ENCODE measurements at regions of chr21 and their contacts with region 1.

Region 1: DNA sequence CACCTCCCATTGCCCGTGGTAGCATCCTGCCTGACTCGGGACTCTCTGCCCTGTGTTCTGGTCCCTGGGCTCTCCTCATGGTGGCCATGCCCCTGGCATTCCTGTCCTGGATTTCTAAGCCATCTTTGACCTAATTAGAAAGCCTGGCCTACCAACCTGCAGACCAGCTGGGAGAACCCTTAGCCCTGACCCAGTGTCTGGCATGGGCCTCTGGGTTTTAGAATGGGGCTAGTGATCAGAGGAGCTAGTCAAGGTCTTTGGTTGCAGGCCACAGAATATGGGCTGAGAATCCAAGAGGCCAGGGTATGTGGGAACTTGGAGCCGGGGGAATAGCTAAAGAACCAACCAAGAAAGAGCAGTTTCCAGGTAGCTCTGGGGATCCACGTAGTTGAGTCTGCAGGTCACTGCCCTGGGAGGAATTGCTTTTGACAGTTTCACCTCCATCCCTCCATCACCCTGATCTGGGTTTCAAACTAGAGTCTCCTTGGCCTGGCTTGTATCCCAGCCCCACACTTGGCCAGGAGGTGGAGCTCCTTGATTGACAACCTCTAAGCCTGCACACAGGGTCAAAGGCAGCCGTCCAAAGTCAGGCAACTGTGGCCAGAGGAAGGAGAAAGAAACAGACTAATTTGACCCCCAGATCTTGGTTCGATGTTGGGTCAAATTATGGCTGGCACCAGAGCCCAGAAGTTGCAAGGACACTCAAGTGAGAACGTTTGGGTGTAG is 54.7 kb upstream of the ABCG1 start:
- DNase-seq: peak in 9 of 10 donors; percentile 16 to 77 (median 71)
- H3K4me3 ChIP-seq: no peak overlapping the region
- H3K27ac ChIP-seq: peak overlapping the region in 33 of 59 donors; percentile 1 to 73 (median 49)
- H3K27me3 ChIP-seq: no peaks in the 10 kb centered on the region
- CTCF ChIP-seq: peak in 54 of 56 donors; percentile 24 to 74 (median 58)

Region 2: DNA sequence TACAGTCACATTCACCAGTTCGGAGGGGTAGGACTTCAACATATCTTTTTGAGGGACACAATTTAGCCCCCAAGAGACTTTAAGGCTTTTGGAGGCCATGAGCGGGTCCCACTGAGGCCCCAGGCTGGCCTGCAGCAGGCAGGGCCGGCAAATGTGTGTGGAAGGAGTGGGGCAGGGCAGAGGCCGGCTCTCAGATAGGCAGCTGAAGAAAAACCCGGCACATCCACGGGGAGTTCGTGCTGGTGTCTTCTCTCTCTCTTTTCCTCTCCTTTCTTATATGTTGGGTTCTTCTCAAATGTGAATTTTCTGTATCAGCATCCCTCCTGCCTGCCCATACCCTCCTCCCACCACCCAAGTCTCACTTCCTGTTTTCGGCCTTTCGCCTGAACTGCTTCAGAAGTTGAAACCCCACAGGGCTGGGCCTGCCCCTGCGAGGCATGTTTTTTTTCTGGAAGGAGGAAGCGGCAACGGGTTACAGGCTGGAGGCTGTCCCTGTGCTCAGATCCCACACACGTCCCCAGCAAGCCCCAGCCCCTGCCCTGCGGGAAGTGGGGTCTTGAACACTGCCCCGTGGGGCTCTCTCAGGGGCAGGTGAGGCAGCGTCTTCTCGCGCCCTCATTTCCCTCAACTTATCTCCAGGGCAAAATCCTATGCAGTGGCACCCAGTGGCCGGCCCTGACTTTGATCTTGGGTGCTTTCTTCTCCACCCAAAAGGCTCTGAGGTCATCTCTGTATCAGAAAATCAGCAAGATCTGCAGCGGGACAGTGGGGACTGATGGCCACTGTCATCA is 102.8 kb before region 1 on chr21:
- intact Hi-C with region 1: no loop called
- DNase-seq: no peak
- H3K4me3 ChIP-seq: no peak overlapping the region
- H3K27ac ChIP-seq: peak overlapping the region in 3 of 59 donors; percentile 15 to 47 (median 31)
- H3K27me3 ChIP-seq: no peaks in the 10 kb centered on the region
- CTCF ChIP-seq: no peak

Region 3: DNA sequence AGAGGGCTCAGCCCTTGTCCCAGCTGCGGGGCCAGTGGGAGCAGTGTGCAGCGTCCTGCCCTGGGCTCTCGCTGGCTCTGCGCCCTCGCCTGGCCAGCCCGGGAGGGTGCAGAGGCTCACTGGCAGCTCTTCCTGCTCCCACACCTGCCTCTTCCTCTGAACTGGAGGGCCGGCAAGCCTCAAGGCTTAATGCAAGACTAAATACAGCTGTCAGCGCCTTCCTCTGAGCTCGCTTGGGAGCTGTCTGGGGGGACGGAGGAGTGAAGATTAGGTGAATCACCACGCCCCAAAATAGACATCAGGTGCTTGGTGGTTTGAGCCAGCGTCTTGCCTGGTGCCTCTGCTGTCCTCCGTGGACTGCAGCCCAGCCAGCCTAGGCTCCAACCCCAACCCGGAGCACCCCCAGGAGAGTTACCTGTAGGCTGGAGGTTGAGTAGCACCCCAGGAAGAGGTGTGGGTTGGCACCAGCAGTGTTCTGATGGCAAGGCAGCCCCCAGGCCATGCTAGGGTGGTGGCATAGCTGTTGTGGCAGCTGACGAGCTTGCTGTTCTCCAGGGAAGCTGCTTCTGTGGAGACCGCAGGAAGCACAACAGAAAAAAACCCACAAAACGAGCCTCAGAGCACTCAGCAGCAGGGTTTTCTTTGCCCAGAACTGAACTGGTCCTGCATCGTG is 56.2 kb before region 1 on chr21:
- intact Hi-C with region 1: no loop called
- DNase-seq: peak in 8 of 10 donors; percentile 27 to 74 (median 63)
- H3K4me3 ChIP-seq: peak overlapping the region in 32 of 59 donors; percentile 4 to 44 (median 22)
- H3K27ac ChIP-seq: peak overlapping the region in 51 of 59 donors; percentile 3 to 86 (median 66)
- H3K27me3 ChIP-seq: no peaks in the 10 kb centered on the region
- CTCF ChIP-seq: peak in 51 of 56 donors; percentile 15 to 76 (median 52)

Region 4: DNA sequence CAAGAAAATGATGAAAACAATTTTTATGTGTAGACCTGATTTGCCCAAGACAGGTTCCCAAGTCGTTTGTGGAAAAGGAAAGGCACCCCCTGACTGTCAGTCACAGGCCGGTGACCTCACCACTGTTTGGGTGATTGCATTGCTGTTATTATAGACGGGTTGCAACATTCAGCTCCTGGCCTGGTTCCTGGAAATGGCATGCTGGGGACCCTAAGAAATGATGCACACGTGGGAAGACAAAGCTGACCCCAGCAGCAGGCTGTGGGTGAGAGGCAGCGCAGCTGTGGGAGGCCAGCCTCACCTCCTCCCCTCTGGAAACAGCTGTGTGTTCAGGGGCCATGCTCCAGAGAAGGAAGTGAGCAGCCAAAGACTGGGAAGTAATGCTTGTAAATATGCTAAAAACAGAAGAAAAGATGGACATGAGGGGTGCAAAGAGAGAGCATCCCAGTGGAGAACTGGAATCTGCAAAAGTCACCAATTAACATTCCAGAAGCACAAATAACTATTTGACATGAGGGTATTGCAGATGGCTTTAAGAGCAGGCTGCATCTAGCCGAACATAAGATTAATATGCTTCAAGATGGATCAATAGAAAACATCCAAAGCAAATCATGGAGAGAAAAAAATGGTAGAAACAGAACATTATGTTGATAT is 31.3 kb after region 1 on chr21:
- intact Hi-C with region 1: no loop called
- DNase-seq: peak in 1 of 10 donors; percentile 13
- H3K4me3 ChIP-seq: no peak overlapping the region
- H3K27ac ChIP-seq: no peak overlapping the region
- H3K27me3 ChIP-seq: peaks cover 0 to 2% (median 0%) of the 10 kb centered on the region in 45 donors
- CTCF ChIP-seq: no peak

Region 5: GRCh38 chr21:42449296-42449927 is 285.2 kb after region 1 on chr21:
- intact Hi-C with region 1: loop called in 1 of 2 experiments (anchors 5 kb)
- DNase-seq: no peak
- H3K4me3 ChIP-seq: no peak overlapping the region
- H3K27ac ChIP-seq: peak overlapping the region in 2 of 59 donors; percentile 2 to 15
- H3K27me3 ChIP-seq: peaks cover 0 to 4% (median 0%) of the 10 kb centered on the region in 45 donors
- CTCF ChIP-seq: no peak

Region 6: GRCh38 chr21:43585924-43586424 is 1421.7 kb after region 1 on chr21:
- intact Hi-C with region 1: no loop called
- DNase-seq: no peak
- H3K4me3 ChIP-seq: no peak overlapping the region
- H3K27ac ChIP-seq: peak overlapping the region in 6 of 59 donors; percentile 2 to 74 (median 31)
- H3K27me3 ChIP-seq: no peaks in the 10 kb centered on the region
- CTCF ChIP-seq: no peak

Measured in dorsolateral prefrontal cortex (tissue), 120 donors.